ENCODE measurements at regions of chr16 and their contacts with region 1.

Region 1: GRCh38 chr16:2926650-2927646 is 15.2 kb downstream of the FLYWCH1 start:
- DNase-seq: peak; percentile 83 to 97 (median 92)
- H3K4me3 ChIP-seq: no peak overlapping the region
- H3K27ac ChIP-seq: peak overlapping the region in 1 of 5 donors; percentile 11
- H3K4me1 ChIP-seq: peaks cover 0 to 8% of the 10 kb centered on the region in 2 donors
- H3K27me3 ChIP-seq: no peaks in the 10 kb centered on the region
- CTCF ChIP-seq: peak; percentile 93 to 98 (median 94)
- POLR2A ChIP-seq: no peak

Region 2: DNA sequence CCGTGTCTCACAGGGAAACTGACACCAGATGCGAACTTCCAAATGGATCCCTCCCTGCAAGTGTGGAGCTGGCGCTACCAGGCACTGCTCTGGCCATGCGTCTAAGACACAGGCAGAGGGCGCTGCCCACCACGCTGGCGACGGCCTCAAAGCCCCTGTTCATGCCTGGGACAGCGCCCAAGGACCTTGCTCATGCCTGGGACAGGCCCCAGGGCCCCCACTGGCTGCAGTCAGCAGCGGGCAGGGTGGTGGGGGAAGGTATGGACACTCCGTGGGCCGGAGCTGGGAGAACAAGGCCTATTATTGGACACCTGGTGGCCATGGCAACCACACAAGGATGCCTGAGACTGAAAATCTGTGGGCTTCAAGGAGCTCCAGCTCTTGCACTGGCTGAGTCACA is 88.0 kb before region 1 on chr16:
- intact Hi-C with region 1: loop called in 1 of 2 experiments (anchors 5 kb)
- DNase-seq: peak; percentile 74 to 90 (median 86)
- H3K4me3 ChIP-seq: no peak overlapping the region
- H3K27ac ChIP-seq: no peak overlapping the region
- H3K4me1 ChIP-seq: peaks cover 0 to 6% of the 10 kb centered on the region in 2 donors
- H3K27me3 ChIP-seq: peaks cover 5% of the 10 kb centered on the region
- CTCF ChIP-seq: peak; percentile 77 to 95 (median 90)
- POLR2A ChIP-seq: no peak

Region 3: GRCh38 chr16:2980227-2981086 is 53.5 kb after region 1 on chr16 and contains the start of gene PKMYT1:
- intact Hi-C with region 1: loop called in 1 of 2 experiments (anchors 10 kb)
- DNase-seq: peak; percentile 85 to 93 (median 90)
- H3K4me3 ChIP-seq: peak within 1 kb of the TSS in 3 of 4 donors; percentile 16 to 72 (median 62)
- H3K27ac ChIP-seq: peak within 1 kb of the TSS in 4 of 5 donors; percentile 78 to 84 (median 82)
- H3K4me1 ChIP-seq: peaks cover 12 to 24% of the 10 kb centered on the region in 2 donors
- H3K27me3 ChIP-seq: peaks cover 4% of the 10 kb centered on the region
- CTCF ChIP-seq: no peak
- POLR2A ChIP-seq: peak; percentile 87 to 93
- total RNA-seq, gene PKMYT1: 0.46 to 7.0 (median 2.9) TPM